GM10248 (cell line): ENCODE measurements at regions of chr6 and their contacts with region 1.

Region 1: DNA sequence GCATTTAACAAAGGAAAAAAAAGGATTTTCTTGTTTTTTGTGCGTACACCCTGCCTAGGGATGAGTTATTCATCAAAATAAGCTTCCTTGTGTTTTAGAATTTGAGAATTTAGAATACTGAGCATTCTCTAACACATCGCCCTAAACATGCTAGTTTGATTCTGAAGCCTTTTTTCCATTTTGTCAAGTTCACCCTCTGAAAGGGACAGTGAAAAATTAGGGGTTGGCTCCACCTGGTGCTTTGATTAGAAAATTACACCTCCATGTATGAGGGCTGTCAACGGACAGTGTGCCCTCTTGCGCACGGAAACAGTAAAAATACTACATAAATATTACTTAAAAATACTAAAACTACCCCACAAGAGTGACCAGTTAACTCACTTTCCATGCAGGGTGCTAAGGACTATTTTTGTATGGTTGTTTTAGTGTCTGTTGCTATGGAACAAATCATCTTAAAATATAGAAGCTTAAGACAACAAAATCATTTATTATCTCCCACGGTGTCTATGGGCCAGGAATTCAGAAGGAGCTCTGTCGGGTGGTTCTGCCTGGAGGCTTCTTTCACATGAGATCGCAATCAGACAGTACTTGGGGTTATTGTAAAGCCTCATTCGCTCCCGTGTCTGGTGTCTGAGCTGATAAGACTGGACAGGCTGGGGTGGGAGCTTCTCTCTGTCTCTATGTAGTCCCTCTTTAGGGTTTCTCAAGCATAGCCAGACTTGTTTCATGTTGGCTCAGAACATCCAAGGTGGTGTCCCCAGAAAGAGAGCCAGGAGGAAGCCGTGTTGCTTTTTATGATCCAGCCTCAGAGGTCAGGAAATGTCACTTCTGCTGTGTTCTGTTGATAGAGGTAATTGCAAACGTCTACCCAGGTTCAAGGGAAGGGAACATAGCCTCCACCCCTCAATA is 41.1 kb upstream of the TMEM170B start:
- DNase-seq: peak; percentile 72
- CTCF ChIP-seq: peak; percentile 75

Region 2: DNA sequence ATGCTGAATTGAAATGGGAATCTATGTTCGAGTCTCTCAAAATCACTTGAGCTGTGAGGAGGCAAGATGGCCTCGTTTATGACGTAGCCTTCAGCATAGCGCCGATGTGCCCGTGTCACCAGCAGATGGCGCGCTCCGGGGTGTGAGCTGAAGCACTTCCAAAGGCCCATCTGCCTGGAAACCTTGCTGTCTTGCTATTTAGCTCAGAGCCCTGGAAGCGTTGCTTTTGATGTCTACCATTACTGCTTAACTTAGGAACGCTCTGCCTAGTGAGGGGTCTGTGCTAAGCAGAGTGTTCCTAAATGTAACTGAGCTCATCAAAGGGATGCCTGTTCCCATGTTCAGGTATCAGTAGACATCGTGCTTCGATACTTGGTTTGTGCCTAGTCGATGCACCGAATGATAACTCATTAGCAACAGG is 541.8 kb before region 1 on chr6:
- CTCF ChIA-PET with region 1: interaction called, 24 read pairs
- POLR2A ChIA-PET with region 1: no interaction called
- DNase-seq: peak; percentile 72
- CTCF ChIP-seq: peak; percentile 94

Region 3: DNA sequence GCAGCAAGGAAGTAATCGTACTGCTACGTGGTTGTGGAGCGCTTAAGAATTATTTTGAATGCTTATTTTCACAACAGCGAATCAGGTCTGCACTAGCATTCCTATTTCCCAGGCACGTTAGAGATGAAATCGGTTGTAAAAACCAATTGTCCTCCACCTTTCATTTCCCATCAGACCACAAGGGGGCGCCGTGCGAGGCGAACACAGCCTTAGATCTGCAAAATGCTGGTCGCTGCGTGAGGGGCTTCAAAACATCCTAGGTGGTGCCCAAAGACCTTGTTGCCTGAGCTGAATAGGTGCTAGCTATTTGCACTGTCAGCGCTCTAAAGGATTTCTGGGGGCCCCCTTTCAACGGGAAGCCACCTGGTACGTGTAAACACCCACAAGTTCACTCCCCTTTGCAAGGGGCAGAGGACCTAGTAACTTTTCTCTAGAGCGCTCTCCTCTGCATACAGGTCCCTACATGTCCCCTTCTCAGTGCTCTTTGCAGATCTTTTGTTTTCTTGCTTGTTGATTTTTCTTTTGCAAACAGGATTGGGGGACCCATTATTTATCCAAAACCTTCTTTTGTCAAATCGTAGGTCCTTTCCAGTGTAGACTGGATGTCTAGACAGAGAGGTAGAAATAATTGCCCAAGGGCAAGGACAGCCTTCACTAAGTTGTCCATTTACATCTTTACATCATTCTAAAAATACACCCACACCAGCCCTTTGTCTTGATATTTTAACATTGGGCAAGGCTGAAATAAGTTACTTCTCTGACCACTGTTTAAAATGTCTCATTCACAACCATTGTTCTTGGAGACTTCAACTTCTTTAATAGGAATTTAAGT is 323.7 kb before region 1 on chr6:
- CTCF ChIA-PET with region 1: interaction called, 107 read pairs
- POLR2A ChIA-PET with region 1: no interaction called
- DNase-seq: peak; percentile 68
- CTCF ChIP-seq: peak; percentile 69

Region 4: DNA sequence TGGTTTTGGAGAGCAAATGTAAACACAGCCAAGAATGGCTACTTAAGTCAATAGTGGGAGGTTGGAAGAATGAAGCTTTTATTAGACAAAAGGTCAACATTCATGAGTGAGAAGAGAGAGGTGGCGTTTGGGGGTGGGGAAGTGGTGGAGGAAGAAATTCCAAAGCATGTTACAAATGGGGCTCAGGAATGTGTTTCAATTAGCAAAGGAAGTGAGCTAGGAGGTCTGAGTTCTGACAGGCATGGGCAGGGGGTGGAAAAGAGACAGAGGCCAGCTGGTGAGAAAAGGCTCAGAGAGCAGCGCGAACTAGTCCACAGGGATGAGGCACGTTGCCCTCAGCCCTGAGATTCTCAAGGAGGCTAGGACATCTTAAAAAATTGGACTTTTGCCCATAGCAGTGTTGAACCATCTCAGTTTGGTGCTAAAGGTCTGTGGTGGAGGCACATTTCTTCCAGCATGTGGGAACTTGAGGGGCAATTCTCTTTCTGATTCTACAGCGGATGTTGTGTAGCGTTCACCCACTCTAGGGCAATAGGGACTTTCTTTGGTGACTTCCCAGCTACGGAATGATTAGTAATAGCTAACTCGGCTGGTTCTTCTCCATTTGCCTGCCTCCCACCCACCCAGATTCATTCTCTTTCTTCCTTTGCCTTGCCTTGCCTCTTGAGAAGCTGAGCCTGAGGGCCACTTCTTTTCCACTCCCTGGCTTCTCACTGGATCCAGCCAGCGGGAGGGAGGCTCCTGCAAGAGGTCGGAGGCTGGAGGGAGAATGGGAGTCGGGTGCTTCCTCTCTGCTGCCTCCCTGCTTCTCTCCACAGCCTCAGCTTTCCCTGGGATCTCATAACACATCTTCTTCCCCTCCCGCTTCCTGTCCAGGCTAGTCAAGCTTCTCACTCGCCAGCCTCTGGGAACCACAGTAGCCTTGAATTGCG is 218.9 kb before region 1 on chr6:
- CTCF ChIA-PET with region 1: interaction called, 36 read pairs
- POLR2A ChIA-PET with region 1: no interaction called
- DNase-seq: peak; percentile 77
- CTCF ChIP-seq: no peak

Region 5: GRCh38 chr6:11346516-11346915 is 149.9 kb before region 1 on chr6:
- CTCF ChIA-PET with region 1: interaction called, 17 read pairs
- POLR2A ChIA-PET with region 1: no interaction called
- DNase-seq: peak; percentile 35
- CTCF ChIP-seq: no peak

Region 6: GRCh38 chr6:11414176-11414963 is 82.0 kb before region 1 on chr6:
- CTCF ChIA-PET with region 1: interaction called, 24 read pairs
- POLR2A ChIA-PET with region 1: no interaction called
- DNase-seq: no peak
- CTCF ChIP-seq: no peak

Region 7: DNA sequence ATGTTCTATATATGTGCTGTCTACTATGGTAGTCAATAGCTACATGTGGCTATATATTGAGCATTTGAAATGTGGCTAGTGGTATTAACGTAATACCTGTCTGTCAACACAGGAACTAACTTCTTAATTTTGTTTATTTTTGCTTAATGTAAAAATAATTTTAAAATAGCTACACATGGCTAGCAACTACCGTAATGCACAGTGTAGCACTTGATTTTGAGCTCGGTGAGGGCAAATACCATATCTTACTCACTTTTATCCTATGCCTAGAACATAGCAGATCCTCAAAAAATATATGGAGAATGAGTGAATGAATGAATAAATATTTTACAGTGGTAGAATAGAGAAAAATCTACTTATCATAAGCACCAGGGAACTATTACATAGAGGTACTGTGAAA is 13.1 kb after region 1 on chr6:
- CTCF ChIA-PET with region 1: interaction called, 37 read pairs
- POLR2A ChIA-PET with region 1: no interaction called
- DNase-seq: no peak
- CTCF ChIP-seq: no peak

Region 8: DNA sequence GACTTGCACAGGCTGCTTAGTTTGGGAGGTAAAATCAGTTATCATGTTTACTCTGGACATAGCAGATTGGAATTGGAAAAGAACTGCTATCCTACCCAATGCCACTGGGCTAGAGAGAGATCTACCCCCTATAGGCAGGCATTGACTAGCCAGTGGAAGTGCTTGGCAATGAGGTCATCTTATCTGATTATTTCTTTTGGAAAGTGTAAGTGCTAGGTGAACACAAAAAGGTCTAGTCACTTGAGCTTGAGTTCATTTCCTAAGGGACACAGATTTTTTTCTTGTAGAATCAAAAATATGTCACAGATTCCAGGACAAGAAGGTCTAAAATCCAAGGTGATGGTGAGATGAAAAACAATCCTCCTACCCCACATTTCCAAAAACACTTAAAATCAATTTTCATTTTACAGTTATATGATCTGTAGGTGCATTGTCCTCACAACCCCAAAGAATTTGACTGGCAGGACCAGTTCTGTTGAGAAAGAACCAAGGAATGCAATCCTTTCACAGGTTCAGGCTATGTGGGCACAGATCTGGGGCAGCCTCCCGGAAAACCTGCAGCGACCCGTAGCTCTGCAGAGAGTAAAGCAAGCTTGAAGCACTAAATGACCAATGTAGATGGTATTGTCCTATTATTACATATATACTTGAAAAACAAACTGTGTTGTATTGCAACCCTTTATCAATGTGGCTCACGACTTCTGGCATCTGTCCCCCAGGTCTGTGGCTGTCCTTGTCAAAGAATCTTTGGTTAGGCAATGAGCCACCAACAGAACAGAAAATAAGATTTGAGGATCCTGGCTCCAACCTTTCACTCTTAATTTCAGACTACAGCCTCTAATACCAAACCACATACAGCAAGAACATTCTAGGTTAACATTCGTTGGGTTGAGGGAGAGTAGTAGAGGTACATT is 349.5 kb after region 1 on chr6:
- CTCF ChIA-PET with region 1: no interaction called
- POLR2A ChIA-PET with region 1: no interaction called
- DNase-seq: no peak
- CTCF ChIP-seq: no peak